T-cell (primary cell): ENCODE measurements at regions of chr1 and their contacts with region 1.

Region 1: DNA sequence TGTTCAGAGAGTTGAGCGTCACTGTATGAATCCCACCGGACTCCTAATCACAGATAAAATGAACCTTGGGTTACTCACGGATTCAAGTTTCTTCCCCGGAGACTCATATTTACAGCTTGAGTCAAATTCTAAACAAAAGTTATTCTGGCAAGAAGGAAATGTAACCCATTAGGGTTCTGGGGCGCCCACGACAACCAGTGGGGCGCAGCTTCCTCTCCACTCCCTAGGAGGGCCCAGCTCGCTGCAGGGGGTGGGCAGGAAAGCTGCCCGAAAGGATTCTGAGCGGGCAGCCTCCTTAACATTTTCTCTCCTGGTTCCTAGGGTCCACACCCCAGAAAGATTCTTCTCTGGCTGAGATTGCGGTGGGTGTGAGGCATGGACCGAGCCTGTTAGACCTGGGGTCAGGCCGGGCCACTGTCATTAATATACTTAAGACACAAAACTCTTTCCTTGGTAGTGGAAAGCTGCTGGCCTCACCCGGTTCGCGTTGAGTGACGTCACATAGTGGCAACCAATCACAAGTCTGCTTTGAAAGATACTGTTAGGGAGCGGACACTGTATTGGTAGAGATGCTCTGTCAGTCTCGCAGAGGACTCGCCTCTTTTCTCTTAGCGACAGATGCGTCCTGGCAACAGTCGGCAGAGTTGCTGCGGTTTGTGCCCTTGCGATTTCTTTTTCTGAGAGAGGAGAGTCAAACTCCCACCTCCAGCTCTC is 13.6 kb upstream of the MCOLN3 start:
- DNase-seq: peak; percentile 50 to 96 (median 83)
- ATAC-seq: peak; percentile 99 to 100 (median 100)
- H3K4me3 ChIP-seq: peak overlapping the region; percentile 47 to 69
- H3K4me3 Mint-ChIP-seq: peak overlapping the region; percentile 79 to 85 (median 83)
- H3K27ac ChIP-seq: no peak overlapping the region
- H3K27ac Mint-ChIP-seq: peak overlapping the region; percentile 62 to 76
- H3K4me1 ChIP-seq: peaks cover 8 to 10% of the 10 kb centered on the region in 2 experiments
- H3K4me1 Mint-ChIP-seq: peaks cover 14 to 16% (median 16%) of the 10 kb centered on the region in 3 donors
- H3K27me3 ChIP-seq: peaks cover 0 to 7% of the 10 kb centered on the region in 2 experiments
- H3K27me3 Mint-ChIP-seq: peaks cover 3 to 8% of the 10 kb centered on the region in 2 donors

Region 2: GRCh38 chr1:83954166-83954823 is 1107.6 kb before region 1 on chr1:
- CTCF ChIA-PET with region 1: no interaction called
- POLR2A ChIA-PET with region 1: no interaction called
- DNase-seq: no peak
- ATAC-seq: no peak
- H3K4me3 ChIP-seq: no peak overlapping the region
- H3K4me3 Mint-ChIP-seq: no peak overlapping the region
- H3K27ac ChIP-seq: no peak overlapping the region
- H3K27ac Mint-ChIP-seq: no peak overlapping the region
- H3K4me1 ChIP-seq: no peaks in the 10 kb centered on the region
- H3K4me1 Mint-ChIP-seq: no peaks in the 10 kb centered on the region
- H3K27me3 ChIP-seq: peaks cover 0 to 2% of the 10 kb centered on the region in 2 experiments
- H3K27me3 Mint-ChIP-seq: peaks cover 8% of the 10 kb centered on the region in 2 donors

Region 3: GRCh38 chr1:84842748-84843231 is 219.1 kb before region 1 on chr1:
- CTCF ChIA-PET with region 1: no interaction called
- POLR2A ChIA-PET with region 1: no interaction called
- DNase-seq: no peak
- ATAC-seq: no peak
- H3K4me3 ChIP-seq: no peak overlapping the region
- H3K4me3 Mint-ChIP-seq: no peak overlapping the region
- H3K27ac ChIP-seq: no peak overlapping the region
- H3K27ac Mint-ChIP-seq: no peak overlapping the region
- H3K4me1 ChIP-seq: peaks cover 7 to 8% of the 10 kb centered on the region in 2 experiments
- H3K4me1 Mint-ChIP-seq: peaks cover 13 to 31% (median 17%) of the 10 kb centered on the region in 3 donors
- H3K27me3 ChIP-seq: peaks cover 0 to 4% of the 10 kb centered on the region in 2 experiments
- H3K27me3 Mint-ChIP-seq: peaks cover 0 to 8% of the 10 kb centered on the region in 2 donors

Region 4: GRCh38 chr1:85091671-85092280 is 29.9 kb after region 1 on chr1:
- CTCF ChIA-PET with region 1: interaction called in 1 of 2 experiments, 10 read pairs
- POLR2A ChIA-PET with region 1: no interaction called
- DNase-seq: peak in 1 of 35 experiments; percentile 9
- ATAC-seq: peak in 1 of 4 experiments; percentile 32
- H3K4me3 ChIP-seq: no peak overlapping the region
- H3K4me3 Mint-ChIP-seq: peak overlapping the region; percentile 32 to 59 (median 43)
- H3K27ac ChIP-seq: no peak overlapping the region
- H3K27ac Mint-ChIP-seq: peak overlapping the region; percentile 49 to 65
- H3K4me1 ChIP-seq: peaks cover 4 to 18% of the 10 kb centered on the region in 2 experiments
- H3K4me1 Mint-ChIP-seq: peaks cover 9 to 12% (median 9%) of the 10 kb centered on the region in 3 donors
- H3K27me3 ChIP-seq: no peaks in the 10 kb centered on the region
- H3K27me3 Mint-ChIP-seq: peaks cover 4 to 13% of the 10 kb centered on the region in 2 donors